Activated CD8-positive, alpha-beta T cell treated with anti-CD3 and anti-CD28 coated beads, Interleukin-2, amount 10 ng/mL, durations not matched to agents 7 days and 5 days (primary cell): ENCODE measurements at regions of chr1 and their contacts with region 1.

Region 1: GRCh38 chr1:151828965-151829698 is 2.5 kb downstream of the RORC start:
- DNase-seq: no peak
- ATAC-seq: peak; percentile 7
- H3K4me3 Mint-ChIP-seq: peak overlapping the region; percentile 15
- H3K27ac Mint-ChIP-seq: peak overlapping the region; percentile 76
- H3K4me1 Mint-ChIP-seq: peaks cover 68% of the 10 kb centered on the region
- H3K27me3 Mint-ChIP-seq: peaks cover 2% of the 10 kb centered on the region

Region 2: DNA sequence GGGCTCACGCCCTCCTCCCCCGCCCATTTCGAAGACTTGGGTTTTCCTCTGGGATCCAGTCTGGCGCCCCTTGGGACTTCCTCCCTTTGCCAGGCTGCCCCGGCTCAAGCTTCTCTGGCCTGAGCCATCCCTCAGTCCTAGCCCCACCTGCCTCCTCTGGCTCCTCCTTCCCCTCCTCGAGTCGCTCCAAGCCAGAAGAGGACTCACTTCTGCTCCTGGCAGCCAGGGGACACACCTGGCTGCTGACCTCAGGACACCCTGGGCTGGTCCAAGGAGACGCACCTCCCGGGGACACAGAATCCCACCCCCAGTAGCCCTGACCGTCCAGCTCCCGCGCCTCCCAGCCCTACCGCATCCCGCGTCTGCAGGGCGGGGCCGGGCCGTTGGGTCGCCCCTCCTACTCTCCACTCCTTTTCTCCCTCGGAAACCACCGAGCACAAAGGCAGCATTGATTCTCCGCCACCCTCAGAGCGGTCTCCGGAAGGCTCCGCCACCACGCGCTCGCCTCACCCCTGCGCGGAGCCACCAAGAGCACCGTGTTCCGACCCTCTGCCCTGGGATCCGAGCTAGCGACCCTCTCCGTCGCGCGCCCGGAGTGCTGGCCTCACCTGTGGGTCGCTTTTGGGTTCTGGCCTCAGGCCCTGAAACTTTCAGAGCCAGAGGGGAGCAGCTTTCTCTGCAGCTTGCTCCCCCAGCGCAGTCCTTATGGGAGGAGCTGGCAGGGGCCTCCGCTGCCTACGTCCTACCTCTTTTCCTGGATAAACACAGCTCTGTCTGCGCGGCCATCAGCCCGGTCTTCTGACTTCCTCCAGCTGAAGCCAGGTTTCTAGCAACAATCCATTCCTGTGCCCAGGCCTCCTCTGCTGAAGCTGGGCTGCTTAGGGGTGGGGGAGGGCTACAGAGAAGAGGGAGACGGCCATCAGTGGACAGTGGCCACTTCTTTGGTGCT is 10.6 kb after region 1 on chr1 and contains the start of gene C2CD4D:
- CTCF ChIA-PET with region 1: interaction called, 10 read pairs
- POLR2A ChIA-PET with region 1: interaction called, 17 read pairs
- DNase-seq: peak; percentile 72
- ATAC-seq: peak; percentile 71
- H3K4me3 Mint-ChIP-seq: peak within 1 kb of the TSS; percentile 70
- H3K27ac Mint-ChIP-seq: peak within 1 kb of the TSS; percentile 44
- H3K4me1 Mint-ChIP-seq: peaks cover 46% of the 10 kb centered on the region
- H3K27me3 Mint-ChIP-seq: peaks cover 12% of the 10 kb centered on the region
- total RNA-seq, gene C2CD4D: 0.23 to 0.26 TPM